ENCODE measurements at regions of chr3 and their contacts with region 1.

Region 1: GRCh38 chr3:64533617-64534317 is 154.0 kb downstream of the ADAMTS9 start:
- DNase-seq: peak; percentile 90 to 91
- H3K4me3 ChIP-seq: no peak overlapping the region
- H3K4me3 Mint-ChIP-seq: no peak overlapping the region
- H3K27ac Mint-ChIP-seq: no peak overlapping the region
- H3K4me1 ChIP-seq: peaks cover 16% of the 10 kb centered on the region
- H3K4me1 Mint-ChIP-seq: peaks cover 8% of the 10 kb centered on the region
- H3K27me3 ChIP-seq: no peaks in the 10 kb centered on the region
- H3K27me3 Mint-ChIP-seq: no peaks in the 10 kb centered on the region
- CTCF ChIP-seq: peak; percentile 86 to 89

Region 2: DNA sequence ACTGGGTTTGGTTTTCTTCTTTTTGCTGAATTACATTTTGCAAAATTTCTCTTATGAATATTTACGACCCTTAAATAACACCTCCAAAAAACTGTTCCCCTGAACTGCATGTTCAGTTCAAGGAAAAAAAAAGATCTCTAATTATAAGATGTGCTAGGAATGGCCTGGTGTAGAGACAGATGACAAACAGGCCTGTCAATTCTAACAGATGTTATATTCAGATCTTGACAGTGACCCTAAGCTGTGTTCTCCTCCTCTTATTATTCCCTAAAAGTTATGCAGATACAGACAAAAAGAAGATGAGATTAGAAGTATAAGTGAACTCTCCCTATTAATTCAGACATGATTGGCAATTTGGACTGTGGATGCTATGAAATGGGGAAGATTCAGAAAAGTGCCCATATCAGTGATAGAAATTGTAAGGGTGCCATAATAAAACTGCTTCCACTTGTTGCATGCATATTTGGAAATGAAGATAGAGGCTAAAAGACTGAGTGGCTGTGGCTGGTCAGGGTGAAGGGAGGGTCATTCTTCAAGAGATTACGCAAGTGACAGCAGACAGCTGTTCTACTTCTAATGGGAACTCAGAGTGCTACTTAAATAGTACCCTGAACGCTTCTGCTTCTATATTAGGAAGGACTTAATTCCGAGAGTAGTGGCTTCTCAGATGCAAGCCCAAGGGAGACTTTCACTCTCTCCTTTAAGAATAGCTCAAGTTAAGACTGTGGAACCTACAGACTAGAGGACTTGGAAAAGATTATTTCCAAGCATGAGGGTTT is 78.5 kb after region 1 on chr3:
- CTCF ChIA-PET with region 1: interaction called, 3 read pairs
- POLR2A ChIA-PET with region 1: no interaction called
- intact Hi-C with region 1: loop called (anchors 2 kb)
- DNase-seq: peak; percentile 37 to 50
- H3K4me3 ChIP-seq: no peak overlapping the region
- H3K4me3 Mint-ChIP-seq: peak overlapping the region; percentile 68
- H3K27ac Mint-ChIP-seq: peak overlapping the region; percentile 90
- H3K4me1 ChIP-seq: peaks cover 27% of the 10 kb centered on the region
- H3K4me1 Mint-ChIP-seq: peaks cover 20% of the 10 kb centered on the region
- H3K27me3 ChIP-seq: no peaks in the 10 kb centered on the region; the same call in 1 of the 2 replicates
- H3K27me3 Mint-ChIP-seq: no peaks in the 10 kb centered on the region
- CTCF ChIP-seq: no peak

Region 3: GRCh38 chr3:64685800-64686445 is 152.2 kb after region 1 on chr3:
- CTCF ChIA-PET with region 1: interaction called, 4 read pairs
- POLR2A ChIA-PET with region 1: no interaction called
- intact Hi-C with region 1: loop called (anchors 1 kb)
- DNase-seq: peak; percentile 91 to 94
- H3K4me3 ChIP-seq: peak overlapping the region; percentile 71
- H3K4me3 Mint-ChIP-seq: peak overlapping the region; percentile 87
- H3K27ac Mint-ChIP-seq: peak overlapping the region; percentile 14
- H3K4me1 ChIP-seq: peaks cover 6% of the 10 kb centered on the region; the same call in 1 of the 2 replicates
- H3K4me1 Mint-ChIP-seq: peaks cover 7% of the 10 kb centered on the region
- H3K27me3 ChIP-seq: no peaks in the 10 kb centered on the region
- H3K27me3 Mint-ChIP-seq: peaks cover 3% of the 10 kb centered on the region
- CTCF ChIP-seq: peak; percentile 22 to 56

Region 4: DNA sequence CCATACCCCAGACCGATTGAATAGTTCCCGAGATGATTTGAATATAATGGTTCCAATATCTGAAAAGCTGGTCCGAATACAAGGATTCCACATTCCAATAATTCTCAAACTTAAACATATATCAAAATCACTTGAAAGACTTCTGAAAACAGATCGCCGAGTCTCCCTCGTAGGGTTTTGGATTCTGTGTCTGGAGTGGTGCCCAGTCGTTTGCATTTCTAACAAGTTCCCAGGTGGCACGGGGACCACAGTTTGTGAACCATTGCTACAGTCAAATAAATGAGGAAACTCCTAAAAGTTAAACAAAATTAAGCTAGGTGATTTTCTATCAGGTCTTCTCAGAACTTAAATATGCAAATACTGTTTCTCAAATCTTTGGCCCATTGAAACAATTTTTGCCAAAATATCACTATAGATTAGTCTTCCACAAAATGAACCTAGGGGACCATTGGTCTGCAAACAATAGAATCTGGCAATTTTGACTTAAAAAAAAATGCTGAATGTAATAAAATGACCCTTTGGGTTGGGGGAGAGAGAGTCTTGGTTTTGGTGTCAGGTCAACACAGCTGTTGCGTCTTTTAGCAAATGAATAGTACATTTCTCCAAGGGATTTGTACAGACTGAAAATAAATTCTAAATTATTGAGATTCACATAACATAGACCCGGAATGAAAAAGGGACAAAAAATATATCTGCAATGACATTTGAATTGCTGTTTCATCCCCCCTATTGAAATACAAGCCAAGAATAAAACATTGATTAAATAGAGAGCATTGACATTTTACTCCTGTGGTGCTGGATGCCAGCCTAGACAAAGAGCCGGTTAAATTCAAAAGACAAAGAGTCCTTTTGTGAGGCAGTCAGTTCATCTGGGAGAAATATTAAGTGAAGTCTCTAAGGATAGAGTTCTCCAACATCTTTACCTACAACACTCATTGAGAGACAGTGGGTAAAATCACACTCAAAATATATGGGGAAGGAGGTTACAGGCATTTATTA is 329.7 kb after region 1 on chr3:
- CTCF ChIA-PET with region 1: interaction called, 16 read pairs
- POLR2A ChIA-PET with region 1: no interaction called
- intact Hi-C with region 1: no loop called
- DNase-seq: no peak
- H3K4me3 ChIP-seq: no peak overlapping the region
- H3K4me3 Mint-ChIP-seq: no peak overlapping the region
- H3K27ac Mint-ChIP-seq: no peak overlapping the region
- H3K4me1 ChIP-seq: no peaks in the 10 kb centered on the region
- H3K4me1 Mint-ChIP-seq: no peaks in the 10 kb centered on the region
- H3K27me3 ChIP-seq: no peaks in the 10 kb centered on the region
- H3K27me3 Mint-ChIP-seq: no peaks in the 10 kb centered on the region
- CTCF ChIP-seq: no peak

Region 5: GRCh38 chr3:64954995-64955636 is 421.3 kb after region 1 on chr3:
- CTCF ChIA-PET with region 1: no interaction called
- POLR2A ChIA-PET with region 1: no interaction called
- intact Hi-C with region 1: no loop called
- DNase-seq: no peak
- H3K4me3 ChIP-seq: no peak overlapping the region
- H3K4me3 Mint-ChIP-seq: no peak overlapping the region
- H3K27ac Mint-ChIP-seq: no peak overlapping the region
- H3K4me1 ChIP-seq: no peaks in the 10 kb centered on the region
- H3K4me1 Mint-ChIP-seq: no peaks in the 10 kb centered on the region
- H3K27me3 ChIP-seq: no peaks in the 10 kb centered on the region
- H3K27me3 Mint-ChIP-seq: no peaks in the 10 kb centered on the region
- CTCF ChIP-seq: no peak

Region 6: DNA sequence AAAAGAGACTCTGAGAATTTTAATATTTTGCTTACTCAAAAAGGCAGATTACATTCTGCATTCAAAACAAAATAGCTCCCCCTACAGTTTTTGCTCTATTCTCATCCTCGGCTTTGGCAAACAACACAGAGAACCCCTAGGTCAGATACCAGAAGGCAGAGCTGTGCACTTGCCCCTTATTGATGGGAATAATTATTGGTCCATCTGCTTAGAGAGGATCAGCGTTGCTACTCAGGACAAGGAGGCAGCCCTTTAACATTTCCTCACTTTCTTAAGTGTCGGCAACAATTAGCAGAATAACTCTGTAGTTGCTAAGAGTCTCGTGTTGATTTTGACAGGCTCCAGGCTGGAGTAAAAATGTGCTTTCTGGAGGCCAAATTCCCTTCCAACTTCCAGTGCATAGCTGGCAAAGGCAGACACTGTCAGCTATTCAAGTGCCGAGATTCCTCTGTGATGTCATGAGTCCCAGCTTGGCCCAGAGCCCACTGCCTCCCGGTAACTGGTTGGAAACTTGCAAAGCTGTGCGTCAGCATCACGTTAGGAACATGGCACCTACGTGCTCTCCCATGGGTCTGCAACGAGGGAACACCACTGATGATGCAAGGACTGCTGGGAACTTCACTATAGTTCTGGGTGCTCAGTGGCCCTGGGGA is 636.7 kb after region 1 on chr3:
- CTCF ChIA-PET with region 1: no interaction called
- POLR2A ChIA-PET with region 1: no interaction called
- intact Hi-C with region 1: no loop called
- DNase-seq: no peak
- H3K4me3 ChIP-seq: no peak overlapping the region
- H3K4me3 Mint-ChIP-seq: no peak overlapping the region
- H3K27ac Mint-ChIP-seq: no peak overlapping the region
- H3K4me1 ChIP-seq: peaks cover 8% of the 10 kb centered on the region
- H3K4me1 Mint-ChIP-seq: peaks cover 21% of the 10 kb centered on the region
- H3K27me3 ChIP-seq: no peaks in the 10 kb centered on the region
- H3K27me3 Mint-ChIP-seq: no peaks in the 10 kb centered on the region
- CTCF ChIP-seq: peak; percentile 26 to 36

Region 7: GRCh38 chr3:65245133-65246063 is 711.6 kb after region 1 on chr3:
- CTCF ChIA-PET with region 1: no interaction called
- POLR2A ChIA-PET with region 1: no interaction called
- intact Hi-C with region 1: loop called (anchors 1 kb)
- DNase-seq: no peak
- H3K4me3 ChIP-seq: no peak overlapping the region
- H3K4me3 Mint-ChIP-seq: no peak overlapping the region
- H3K27ac Mint-ChIP-seq: no peak overlapping the region
- H3K4me1 ChIP-seq: peaks cover 16% of the 10 kb centered on the region
- H3K4me1 Mint-ChIP-seq: peaks cover 16% of the 10 kb centered on the region
- H3K27me3 ChIP-seq: no peaks in the 10 kb centered on the region
- H3K27me3 Mint-ChIP-seq: no peaks in the 10 kb centered on the region
- CTCF ChIP-seq: no peak

Region 8: DNA sequence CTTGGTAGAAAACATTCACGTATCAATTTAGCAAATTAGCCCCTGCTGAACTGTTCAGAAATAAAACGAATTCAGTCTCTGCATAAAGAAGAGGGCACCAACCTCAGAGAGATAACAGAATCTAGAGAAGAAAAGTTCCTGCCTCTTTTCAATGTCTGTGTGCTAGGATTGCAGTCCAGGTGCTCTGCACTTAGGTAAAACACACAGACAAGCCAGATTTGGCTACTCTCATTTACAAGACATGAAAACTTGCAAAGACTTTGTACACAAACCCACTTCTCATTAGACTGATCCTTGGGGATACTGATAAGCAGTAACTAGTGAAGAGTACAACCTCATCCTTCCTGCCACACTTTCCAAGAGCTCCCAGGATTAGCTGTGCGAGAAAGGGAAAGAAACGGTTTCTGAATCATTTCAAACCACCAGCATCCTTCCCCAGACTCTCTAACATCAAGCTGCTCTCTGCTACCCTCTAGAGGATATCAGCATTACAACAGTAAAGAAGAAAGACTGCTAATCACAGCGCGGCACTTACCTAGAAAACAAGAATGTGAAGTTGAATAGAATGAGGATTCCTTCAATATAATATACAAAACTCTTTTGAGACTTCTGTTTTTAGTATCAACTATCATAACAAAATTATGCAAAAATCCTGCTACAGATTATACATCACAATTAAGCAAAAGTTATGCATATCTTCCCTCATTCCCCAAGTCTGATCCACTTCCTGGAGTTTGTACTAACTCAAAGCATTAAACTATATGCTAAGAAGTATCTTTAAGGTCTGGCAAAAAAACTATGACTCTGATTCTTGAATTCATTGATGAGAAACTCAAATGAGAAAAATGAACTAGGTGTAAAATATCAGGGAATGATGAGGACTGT is 1198.5 kb after region 1 on chr3:
- CTCF ChIA-PET with region 1: no interaction called
- POLR2A ChIA-PET with region 1: no interaction called
- intact Hi-C with region 1: loop called (anchors 5 kb)
- DNase-seq: peak in 1 of 2 experiments; percentile 59
- H3K4me3 ChIP-seq: no peak overlapping the region
- H3K4me3 Mint-ChIP-seq: no peak overlapping the region
- H3K27ac Mint-ChIP-seq: no peak overlapping the region
- H3K4me1 ChIP-seq: peaks cover 4% of the 10 kb centered on the region; the same call in 1 of the 2 replicates
- H3K4me1 Mint-ChIP-seq: no peaks in the 10 kb centered on the region
- H3K27me3 ChIP-seq: no peaks in the 10 kb centered on the region
- H3K27me3 Mint-ChIP-seq: no peaks in the 10 kb centered on the region
- CTCF ChIP-seq: peak; percentile 57 to 79